ENCODE measurements at regions of chr12 and their contacts with region 1.

Region 1: GRCh38 chr12:50043854-50044253 is 13.5 kb upstream of the ASIC1 start:
- DNase-seq: no peak
- ATAC-seq: no peak
- H3K4me3 ChIP-seq: no peak overlapping the region
- H3K27ac ChIP-seq: no peak overlapping the region
- H3K4me1 ChIP-seq: no peaks in the 10 kb centered on the region
- H3K27me3 ChIP-seq: no peaks in the 10 kb centered on the region
- CTCF ChIP-seq: no peak

Region 2: GRCh38 chr12:49974231-49974675 is 69.6 kb before region 1 on chr12:
- CTCF ChIA-PET with region 1: interaction called, 13 read pairs
- POLR2A ChIA-PET with region 1: no interaction called
- in situ Hi-C with region 1: no loop called
- intact Hi-C with region 1: no loop called
- DNase-seq: no peak
- ATAC-seq: peak; percentile 82
- H3K4me3 ChIP-seq: no peak overlapping the region
- H3K27ac ChIP-seq: no peak overlapping the region
- H3K4me1 ChIP-seq: peaks cover 17% of the 10 kb centered on the region; the same call in 1 of the 2 replicates
- H3K27me3 ChIP-seq: no peaks in the 10 kb centered on the region
- CTCF ChIP-seq: peak; percentile 78

Region 3: GRCh38 chr12:50055831-50056638 is 12.2 kb after region 1 on chr12:
- CTCF ChIA-PET with region 1: interaction called, 18 read pairs
- POLR2A ChIA-PET with region 1: no interaction called
- in situ Hi-C with region 1: no loop called
- intact Hi-C with region 1: no loop called
- DNase-seq: no peak
- ATAC-seq: peak; percentile 69
- H3K4me3 ChIP-seq: peak overlapping the region in 1 of 2 experiments; percentile 25; a peak in 1 of 4 replicates
- H3K27ac ChIP-seq: no peak overlapping the region
- H3K4me1 ChIP-seq: peaks cover 13% of the 10 kb centered on the region
- H3K27me3 ChIP-seq: 0 out of 2 replicates have a peak, but pooled peaks cover 4% of the 10 kb centered on the region
- CTCF ChIP-seq: peak; percentile 97

Measured in Panc1 (cell line).